H1 (cell line): ENCODE measurements at regions of chr1 and their contacts with region 1.

Region 1: DNA sequence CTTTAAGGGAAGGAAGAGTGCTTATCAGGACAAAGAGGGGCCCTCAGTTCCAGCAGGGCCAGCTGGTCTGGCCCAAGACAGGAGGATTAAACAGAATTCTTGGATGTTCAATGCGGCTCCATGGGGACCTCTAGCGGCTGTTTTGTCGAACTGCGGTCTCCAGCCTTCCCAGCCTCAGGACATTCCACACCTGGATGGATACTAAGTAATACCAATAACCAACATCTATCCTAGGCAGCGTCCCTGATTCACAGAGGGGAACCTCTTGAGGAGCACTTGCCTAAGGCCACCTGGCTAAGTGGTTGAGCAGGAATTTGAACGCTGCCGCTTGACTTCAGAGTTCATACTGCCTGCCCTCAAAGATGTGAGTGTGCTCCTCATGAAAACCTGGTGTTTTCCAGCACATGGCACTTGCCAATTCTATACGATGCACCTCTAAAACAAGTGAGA is 15.5 kb upstream of the CD247 start:
- DNase-seq: peak; percentile 56 to 90
- H3K4me3 ChIP-seq: no peak overlapping the region
- H3K27ac ChIP-seq: no peak overlapping the region
- H3K4me1 ChIP-seq: peaks cover 0 to 3% (median 0%) of the 10 kb centered on the region in 4 experiments; a peak in 2 of 7 replicates
- H3K27me3 ChIP-seq: no peaks in the 10 kb centered on the region
- CTCF ChIP-seq: peak; percentile 79 to 91 (median 84)
- EP300 ChIP-seq: no peak
- POLR2A ChIP-seq: no peak
- RAD21 ChIP-seq: peak; percentile 95 to 98

Region 2: DNA sequence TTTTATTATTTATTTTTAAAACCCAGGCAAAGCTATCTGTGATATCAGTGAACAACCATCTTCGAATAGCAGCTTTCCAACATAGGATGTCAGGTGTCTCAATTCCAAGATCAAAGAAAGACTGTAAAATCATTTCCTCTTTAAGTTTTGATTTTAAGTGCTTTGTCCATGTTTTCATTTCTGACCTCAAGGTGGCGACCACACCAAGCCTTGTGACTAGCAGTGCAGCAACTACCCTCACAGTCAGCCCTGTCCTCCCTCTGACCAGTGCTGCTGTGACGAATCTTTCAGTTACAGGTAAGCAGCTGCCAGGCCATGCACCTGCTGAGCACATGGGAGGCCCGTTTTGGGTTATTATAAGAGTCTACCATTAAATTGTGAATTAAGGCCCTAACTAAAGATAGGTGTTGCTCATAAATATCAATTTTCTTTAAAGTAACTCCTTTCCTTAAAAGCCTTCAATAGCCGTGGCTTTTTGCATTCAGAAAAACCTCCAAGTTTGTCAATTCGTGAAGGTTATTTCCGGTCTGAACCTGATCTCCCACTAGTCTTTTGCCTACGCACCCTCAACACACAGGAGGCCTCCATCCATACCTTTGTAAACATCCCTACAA is 132.5 kb before region 1 on chr1:
- CTCF ChIA-PET with region 1: interaction called, 17 read pairs
- POLR2A ChIA-PET with region 1: no interaction called
- DNase-seq: no peak
- H3K4me3 ChIP-seq: no peak overlapping the region
- H3K27ac ChIP-seq: no peak overlapping the region
- H3K4me1 ChIP-seq: no peaks in the 10 kb centered on the region
- H3K27me3 ChIP-seq: no peaks in the 10 kb centered on the region
- CTCF ChIP-seq: peak; percentile 65 to 75 (median 68)
- EP300 ChIP-seq: no peak
- POLR2A ChIP-seq: no peak
- RAD21 ChIP-seq: peak; percentile 81 to 84

Region 3: GRCh38 chr1:167447521-167448136 is 86.2 kb before region 1 on chr1:
- CTCF ChIA-PET with region 1: interaction called, 74 read pairs
- POLR2A ChIA-PET with region 1: interaction called, 3 read pairs
- DNase-seq: no peak
- H3K4me3 ChIP-seq: no peak overlapping the region
- H3K27ac ChIP-seq: no peak overlapping the region
- H3K4me1 ChIP-seq: peaks cover 0 to 4% (median 2%) of the 10 kb centered on the region in 4 experiments; a peak in 5 of 7 replicates
- H3K27me3 ChIP-seq: no peaks in the 10 kb centered on the region; a peak in 1 of 7 replicates
- CTCF ChIP-seq: no peak
- EP300 ChIP-seq: no peak
- POLR2A ChIP-seq: no peak
- RAD21 ChIP-seq: no peak

Region 4: GRCh38 chr1:167467126-167467710 is 66.7 kb before region 1 on chr1:
- CTCF ChIA-PET with region 1: interaction called, 33 read pairs
- POLR2A ChIA-PET with region 1: no interaction called
- DNase-seq: no peak
- H3K4me3 ChIP-seq: no peak overlapping the region
- H3K27ac ChIP-seq: no peak overlapping the region
- H3K4me1 ChIP-seq: peaks cover 1 to 11% (median 6%) of the 10 kb centered on the region in 4 experiments; a peak in 5 of 7 replicates
- H3K27me3 ChIP-seq: no peaks in the 10 kb centered on the region
- CTCF ChIP-seq: no peak
- EP300 ChIP-seq: no peak
- POLR2A ChIP-seq: no peak
- RAD21 ChIP-seq: no peak

Region 5: GRCh38 chr1:167499664-167500101 is 34.2 kb before region 1 on chr1:
- CTCF ChIA-PET with region 1: interaction called, 11 read pairs
- POLR2A ChIA-PET with region 1: no interaction called
- DNase-seq: no peak
- H3K4me3 ChIP-seq: no peak overlapping the region
- H3K27ac ChIP-seq: no peak overlapping the region
- H3K4me1 ChIP-seq: peaks cover 4 to 12% (median 9%) of the 10 kb centered on the region in 4 experiments; a peak in 5 of 7 replicates
- H3K27me3 ChIP-seq: peaks cover 0 to 2% (median 0%) of the 10 kb centered on the region in 4 experiments; a peak in 1 of 7 replicates
- CTCF ChIP-seq: no peak
- EP300 ChIP-seq: no peak
- POLR2A ChIP-seq: no peak
- RAD21 ChIP-seq: no peak

Region 6: GRCh38 chr1:167548059-167548932 is 14.4 kb after region 1 on chr1:
- CTCF ChIA-PET with region 1: interaction called, 11 read pairs
- POLR2A ChIA-PET with region 1: interaction called, 3 read pairs
- DNase-seq: no peak
- H3K4me3 ChIP-seq: no peak overlapping the region
- H3K27ac ChIP-seq: no peak overlapping the region
- H3K4me1 ChIP-seq: no peaks in the 10 kb centered on the region; a peak in 1 of 7 replicates
- H3K27me3 ChIP-seq: no peaks in the 10 kb centered on the region; a peak in 2 of 7 replicates
- CTCF ChIP-seq: no peak
- EP300 ChIP-seq: no peak
- POLR2A ChIP-seq: no peak
- RAD21 ChIP-seq: no peak